Activated naive CD4-positive, alpha-beta T cell treated with anti-CD3 and anti-CD28 coated beads for 36 hours (primary cell): ENCODE measurements at regions of chr17 and their contacts with region 1.

Region 1: DNA sequence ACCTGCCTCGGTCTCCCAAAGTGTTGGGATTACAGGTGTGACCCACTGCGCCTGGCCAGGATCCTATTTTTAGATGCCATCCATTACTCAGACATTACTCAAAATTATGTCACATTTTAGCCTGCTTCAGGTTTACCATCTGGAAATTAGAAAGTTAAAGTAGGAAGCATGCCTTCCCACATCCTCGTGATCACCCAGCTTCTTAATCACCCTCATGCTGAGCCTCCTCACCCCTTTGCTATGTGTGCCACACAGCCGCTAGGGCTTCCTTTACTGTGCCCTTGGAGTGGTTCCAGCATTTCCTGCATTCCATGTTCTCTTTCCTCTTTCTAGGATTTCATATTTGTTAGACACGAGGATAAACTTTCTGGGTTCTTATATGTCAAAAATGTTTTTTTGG is 9.3 kb downstream of the ADORA2B start:
- DNase-seq: no peak
- H3K4me3 Mint-ChIP-seq: no peak overlapping the region
- H3K27ac Mint-ChIP-seq: no peak overlapping the region
- H3K4me1 Mint-ChIP-seq: peaks cover 22% of the 10 kb centered on the region
- H3K27me3 Mint-ChIP-seq: peaks cover 27% of the 10 kb centered on the region

Region 2: DNA sequence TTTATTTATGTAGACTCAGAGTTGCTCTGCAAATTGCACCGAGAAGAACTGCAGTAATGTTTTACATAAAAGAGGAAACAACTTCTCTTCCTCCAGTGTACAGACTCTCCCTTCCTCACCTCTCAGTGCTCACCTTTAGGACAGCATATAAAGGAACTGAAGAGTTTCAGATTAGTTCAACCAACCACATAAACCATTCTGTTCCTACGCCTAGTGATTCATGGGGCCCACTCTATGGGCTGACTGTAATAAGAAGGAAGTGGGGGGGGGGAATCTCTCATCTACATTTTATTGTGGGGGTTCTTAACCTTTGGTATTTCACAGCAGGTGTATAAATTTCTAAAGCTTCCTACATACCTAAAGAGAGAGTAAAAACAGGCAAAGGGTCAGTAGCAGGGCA is 27.0 kb after region 1 on chr17:
- CTCF ChIA-PET with region 1: no interaction called
- intact Hi-C with region 1: loop called (anchors 1 kb)
- DNase-seq: peak; percentile 65
- H3K4me3 Mint-ChIP-seq: no peak overlapping the region
- H3K27ac Mint-ChIP-seq: no peak overlapping the region
- H3K4me1 Mint-ChIP-seq: peaks cover 21% of the 10 kb centered on the region
- H3K27me3 Mint-ChIP-seq: no peaks in the 10 kb centered on the region

Region 3: DNA sequence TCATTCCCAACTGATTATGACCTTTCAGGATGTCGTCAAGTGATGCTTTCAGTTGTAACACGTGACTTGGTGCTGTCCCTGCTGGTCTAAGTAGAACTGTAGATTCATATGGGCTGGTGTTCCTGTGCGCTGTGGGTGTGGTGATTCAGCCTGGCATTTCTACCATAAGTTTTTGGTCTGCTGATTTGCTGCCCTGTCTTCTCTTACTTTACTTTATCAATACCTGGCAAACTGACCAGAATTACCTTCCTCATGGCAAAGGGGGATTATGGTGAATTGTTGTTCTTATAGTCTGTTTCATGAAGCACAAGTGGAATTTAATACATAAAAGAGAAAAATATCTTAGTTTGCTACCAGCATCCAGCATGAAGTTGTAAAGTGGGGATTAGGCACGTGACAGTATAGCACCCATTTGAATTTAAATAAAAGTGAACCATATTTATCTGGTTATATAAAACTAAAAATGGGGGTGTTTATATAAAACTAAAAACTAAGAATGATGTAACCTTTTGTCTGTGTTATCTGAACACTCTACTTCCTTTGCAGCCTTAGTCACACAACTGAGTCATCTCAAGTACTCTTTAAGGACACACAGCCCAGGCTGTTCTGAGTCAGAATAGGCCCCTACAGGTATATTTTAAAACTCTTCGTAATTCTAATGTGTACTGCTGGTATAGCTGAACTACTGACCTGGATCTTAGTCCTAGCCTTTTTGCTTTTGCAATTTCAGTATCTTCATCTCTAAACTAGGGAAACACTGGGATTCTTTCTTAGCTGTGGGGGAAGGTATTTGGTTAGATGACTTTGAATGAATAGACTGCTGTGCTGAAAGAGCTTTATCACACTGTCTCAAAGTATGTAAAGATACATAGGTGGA is 73.7 kb after region 1 on chr17:
- CTCF ChIA-PET with region 1: no interaction called
- intact Hi-C with region 1: loop called (anchors 1 kb)
- DNase-seq: peak; percentile 82
- H3K4me3 Mint-ChIP-seq: peak overlapping the region; percentile 52
- H3K27ac Mint-ChIP-seq: peak overlapping the region; percentile 97
- H3K4me1 Mint-ChIP-seq: peaks cover 40% of the 10 kb centered on the region
- H3K27me3 Mint-ChIP-seq: no peaks in the 10 kb centered on the region

Region 4: GRCh38 chr17:16232391-16232790 is 278.2 kb after region 1 on chr17:
- CTCF ChIA-PET with region 1: no interaction called
- intact Hi-C with region 1: loop called (anchors 1 kb)
- DNase-seq: no peak
- H3K4me3 Mint-ChIP-seq: no peak overlapping the region
- H3K27ac Mint-ChIP-seq: no peak overlapping the region
- H3K4me1 Mint-ChIP-seq: peaks cover 24% of the 10 kb centered on the region
- H3K27me3 Mint-ChIP-seq: no peaks in the 10 kb centered on the region

Region 5: DNA sequence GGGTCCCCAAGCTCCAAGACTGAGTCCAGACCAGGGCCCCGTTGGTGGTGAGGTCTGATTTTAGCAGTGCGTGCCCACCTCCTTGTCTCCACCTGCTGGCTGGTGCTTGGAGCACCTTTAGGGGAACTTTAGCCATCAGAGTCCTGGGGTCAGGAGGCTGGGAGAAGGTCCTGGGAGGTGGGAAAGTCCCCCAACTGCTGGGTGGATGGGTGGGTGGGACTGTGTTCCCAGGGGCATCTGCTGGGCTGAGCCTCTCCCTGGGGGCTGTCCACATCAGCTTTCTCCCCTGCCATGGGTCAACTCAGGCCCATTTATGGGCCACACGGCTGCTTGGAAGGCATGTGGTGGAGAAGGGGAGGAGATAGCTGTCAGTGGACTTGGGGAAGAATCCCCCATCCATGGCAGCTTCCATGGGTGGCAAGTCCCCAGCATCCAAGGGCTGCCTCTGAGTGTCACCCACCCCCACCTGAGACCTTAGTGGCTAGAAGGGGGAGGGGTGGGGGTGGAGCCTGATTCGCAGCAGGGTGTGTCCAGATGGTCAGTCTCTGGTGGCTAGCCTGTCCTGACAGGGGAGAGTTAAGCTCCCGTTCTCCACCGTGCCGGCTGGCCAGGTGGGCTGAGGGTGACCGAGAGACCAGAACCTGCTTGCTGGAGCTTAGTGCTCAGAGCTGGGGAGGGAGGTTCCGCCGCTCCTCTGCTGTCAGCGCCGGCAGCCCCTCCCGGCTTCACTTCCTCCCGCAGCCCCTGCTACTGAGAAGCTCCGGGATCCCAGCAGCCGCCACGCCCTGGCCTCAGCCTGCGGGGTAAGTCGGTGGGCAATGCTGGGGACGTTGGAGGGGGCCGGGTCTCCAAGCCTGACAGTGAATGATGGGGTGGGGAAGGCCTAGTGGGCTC is 461.1 kb after region 1 on chr17 and contains the start of gene TRPV2:
- CTCF ChIA-PET with region 1: no interaction called
- intact Hi-C with region 1: loop called (anchors 2 kb)
- DNase-seq: peak; percentile 67
- H3K4me3 Mint-ChIP-seq: peak within 1 kb of the TSS; percentile 98
- H3K27ac Mint-ChIP-seq: peak within 1 kb of the TSS; percentile 100
- H3K4me1 Mint-ChIP-seq: peaks cover 43% of the 10 kb centered on the region
- H3K27me3 Mint-ChIP-seq: no peaks in the 10 kb centered on the region
- total RNA-seq, gene TRPV2: 23.7 to 24.8 TPM